Activated CD4-positive, alpha-beta T cell treated with anti-CD3 and anti-CD28 coated beads, Interleukin-2, amount 10 ng/mL, durations not matched to agents 24 days and 14 days (primary cell): ENCODE measurements at regions of chr7 and their contacts with region 1.

Region 1: GRCh38 chr7:50227726-50228125 is 76.8 kb upstream of the IKZF1 start:
- DNase-seq: peak; percentile 63
- H3K4me3 Mint-ChIP-seq: peak overlapping the region; percentile 71
- H3K27ac Mint-ChIP-seq: peak overlapping the region; percentile 89
- H3K4me1 Mint-ChIP-seq: peaks cover 34% of the 10 kb centered on the region
- H3K27me3 Mint-ChIP-seq: no peaks in the 10 kb centered on the region

Region 2: DNA sequence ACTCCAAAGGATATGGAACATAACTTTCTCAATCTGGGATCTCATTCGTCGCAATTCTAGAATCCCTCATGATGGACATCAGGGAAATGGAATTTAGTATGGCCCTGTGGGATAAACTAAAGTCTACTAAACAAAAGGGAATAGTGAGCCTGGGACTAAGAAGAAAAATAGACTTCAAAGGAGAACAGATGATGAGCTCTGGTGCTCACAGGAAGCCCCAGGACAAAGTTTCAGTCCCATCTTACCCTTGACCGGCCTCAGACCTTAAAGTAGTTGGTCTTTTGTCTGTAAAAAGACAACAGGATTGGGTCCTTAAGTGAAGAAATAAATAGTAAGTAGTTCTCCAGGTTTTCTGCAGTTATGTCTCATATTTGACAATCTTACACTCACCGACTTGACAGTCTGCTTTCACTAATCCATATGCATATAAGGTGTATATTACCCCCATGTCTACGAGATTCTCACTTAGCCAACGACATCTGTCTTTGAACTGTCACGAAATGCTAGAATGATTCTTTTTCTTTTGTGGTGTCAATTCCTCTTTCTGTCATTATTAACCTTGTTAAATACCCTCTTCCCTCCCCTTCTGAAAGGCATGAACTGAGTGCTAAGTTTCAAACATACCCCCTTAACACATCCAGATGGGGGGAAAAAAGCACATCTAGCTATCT is 65.9 kb after region 1 on chr7:
- intact Hi-C with region 1: loop called (anchors 1 kb)
- DNase-seq: peak; percentile 45
- H3K4me3 Mint-ChIP-seq: no peak overlapping the region
- H3K27ac Mint-ChIP-seq: no peak overlapping the region
- H3K4me1 Mint-ChIP-seq: peaks cover 25% of the 10 kb centered on the region
- H3K27me3 Mint-ChIP-seq: peaks cover 4% of the 10 kb centered on the region